ENCODE measurements at regions of chr19 and their contacts with region 1.

Region 1: DNA sequence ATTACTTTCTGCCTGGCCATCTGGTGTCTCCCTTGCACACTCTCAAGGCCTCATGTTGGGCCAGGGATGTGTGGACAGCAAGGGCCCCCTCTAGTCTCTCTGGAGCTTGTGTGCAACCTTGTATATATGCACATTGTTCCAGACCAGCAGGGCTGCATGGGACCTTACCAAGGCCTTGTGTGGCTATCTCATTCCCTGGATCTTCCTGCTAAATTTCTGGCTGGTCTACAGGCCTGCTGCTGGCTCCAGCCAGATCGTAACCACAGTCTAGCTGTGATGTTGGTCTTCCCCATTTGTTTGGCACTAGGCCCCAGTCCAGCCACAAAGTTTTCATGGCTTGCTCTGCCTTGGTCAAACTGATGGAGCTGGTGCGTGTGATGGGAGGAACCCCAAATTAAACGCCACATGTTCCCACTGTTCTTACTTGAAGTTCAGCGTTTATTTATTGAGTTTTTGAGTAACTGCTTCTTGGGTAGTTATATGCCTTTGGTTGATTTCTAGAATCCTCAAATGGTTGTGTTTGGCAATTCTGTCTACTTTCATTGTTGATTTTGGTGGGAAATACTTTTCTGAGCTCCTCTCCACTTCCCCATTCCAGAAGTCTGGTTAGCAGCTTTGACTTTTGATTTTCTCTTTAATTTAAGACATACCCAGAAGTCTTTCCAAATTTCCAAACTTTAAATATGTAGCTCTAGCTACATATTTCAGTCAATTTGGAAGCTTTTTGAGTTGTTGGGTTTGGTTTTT is 56.4 kb downstream of the SIPA1L3 start:
- DNase-seq: peak; percentile 96
- H3K4me3 ChIP-seq: no peak overlapping the region
- CTCF ChIP-seq: no peak

Region 2: DNA sequence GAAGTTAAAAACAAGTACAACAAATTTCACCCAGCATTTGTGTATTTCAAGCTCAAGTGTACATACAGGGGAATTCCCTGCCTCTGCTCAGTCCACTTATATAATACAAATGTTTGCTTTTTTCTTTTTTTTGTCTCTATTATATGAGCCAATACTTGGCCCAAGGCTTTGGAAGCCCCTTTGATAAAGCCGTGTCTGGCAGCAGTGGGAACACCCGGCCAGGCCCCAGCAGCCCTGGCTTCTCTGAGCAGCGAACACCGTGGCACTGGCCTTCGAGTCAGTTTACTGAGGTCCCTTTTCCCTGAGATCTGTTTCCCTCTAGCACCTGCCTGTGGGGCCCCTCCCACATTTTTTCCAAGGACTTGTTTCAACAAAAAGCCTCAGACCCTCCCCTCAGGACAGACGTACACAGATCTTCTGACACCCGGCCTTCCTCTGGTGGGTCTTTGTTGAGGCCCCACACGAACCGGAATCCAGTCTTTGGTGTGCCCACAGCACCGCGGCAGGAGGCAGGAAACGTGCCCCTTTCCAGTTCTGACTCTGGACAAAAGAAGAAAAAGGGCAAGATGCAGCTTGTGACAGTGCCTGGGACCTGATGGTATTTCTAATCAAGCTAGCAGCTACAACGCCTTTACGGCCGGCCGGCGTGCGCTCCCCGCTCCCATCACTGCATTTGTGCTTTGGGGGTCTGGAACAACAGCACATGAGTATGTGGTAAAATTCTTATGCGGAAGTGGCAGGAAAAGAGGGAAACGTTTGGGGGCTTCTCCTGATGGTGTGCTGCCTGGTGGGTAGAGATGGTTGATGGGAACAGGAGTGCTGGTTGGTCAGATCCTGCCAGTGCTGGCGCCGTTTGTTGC is 42.5 kb before region 1 on chr19:
- in situ Hi-C with region 1: loop called (anchors 5 kb)
- DNase-seq: no peak
- H3K4me3 ChIP-seq: no peak overlapping the region
- CTCF ChIP-seq: no peak

Region 3: GRCh38 chr19:38062959-38063761 is 99.8 kb after region 1 on chr19:
- in situ Hi-C with region 1: loop called (anchors 5 kb)
- DNase-seq: no peak
- H3K4me3 ChIP-seq: no peak overlapping the region
- CTCF ChIP-seq: no peak

Region 4: GRCh38 chr19:38142176-38143035 is 179.0 kb after region 1 on chr19:
- in situ Hi-C with region 1: loop called (anchors 10 kb)
- DNase-seq: no peak
- H3K4me3 ChIP-seq: no peak overlapping the region
- CTCF ChIP-seq: peak; percentile 97